ENCODE measurements at regions of chr7 and their contacts with region 1.

Region 1: GRCh38 chr7:98251841-98252639 is at the start of gene TECPR1:
- DNase-seq: peak; percentile 87 to 99
- H3K4me3 ChIP-seq: peak within 1 kb of the TSS; percentile 100
- H3K27ac ChIP-seq: peak within 1 kb of the TSS; percentile 71
- H3K4me1 ChIP-seq: peaks cover 25% of the 10 kb centered on the region
- H3K27me3 ChIP-seq: no peaks in the 10 kb centered on the region
- CTCF ChIP-seq: no peak
- total RNA-seq, gene TECPR1: 22.7 and 27.4 TPM in 2 replicates

Region 2: DNA sequence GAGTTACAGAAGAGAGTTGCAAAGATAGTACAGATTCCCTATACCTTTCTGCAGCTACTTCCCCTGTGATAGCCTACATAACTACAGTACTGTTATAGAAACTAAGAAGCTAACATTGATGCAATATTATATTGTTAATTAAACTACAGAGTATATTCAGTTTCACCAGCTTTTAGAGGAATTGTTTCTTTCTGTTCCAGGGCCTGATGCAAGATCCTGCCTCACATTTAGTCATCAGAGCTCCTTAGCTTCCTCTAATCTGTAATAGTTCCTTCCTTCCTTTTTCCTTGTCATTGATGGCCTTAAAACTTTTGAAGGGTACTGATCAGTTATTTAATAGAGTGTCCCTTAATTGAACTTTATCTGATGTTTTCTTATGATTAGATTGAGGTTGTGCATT is 1077.7 kb before region 1 on chr7:
- CTCF ChIA-PET with region 1: no interaction called
- POLR2A ChIA-PET with region 1: interaction called, 11 read pairs
- intact Hi-C with region 1: no loop called
- DNase-seq: no peak
- H3K4me3 ChIP-seq: no peak overlapping the region
- H3K27ac ChIP-seq: no peak overlapping the region
- H3K4me1 ChIP-seq: no peaks in the 10 kb centered on the region
- H3K27me3 ChIP-seq: no peaks in the 10 kb centered on the region
- CTCF ChIP-seq: no peak

Region 3: DNA sequence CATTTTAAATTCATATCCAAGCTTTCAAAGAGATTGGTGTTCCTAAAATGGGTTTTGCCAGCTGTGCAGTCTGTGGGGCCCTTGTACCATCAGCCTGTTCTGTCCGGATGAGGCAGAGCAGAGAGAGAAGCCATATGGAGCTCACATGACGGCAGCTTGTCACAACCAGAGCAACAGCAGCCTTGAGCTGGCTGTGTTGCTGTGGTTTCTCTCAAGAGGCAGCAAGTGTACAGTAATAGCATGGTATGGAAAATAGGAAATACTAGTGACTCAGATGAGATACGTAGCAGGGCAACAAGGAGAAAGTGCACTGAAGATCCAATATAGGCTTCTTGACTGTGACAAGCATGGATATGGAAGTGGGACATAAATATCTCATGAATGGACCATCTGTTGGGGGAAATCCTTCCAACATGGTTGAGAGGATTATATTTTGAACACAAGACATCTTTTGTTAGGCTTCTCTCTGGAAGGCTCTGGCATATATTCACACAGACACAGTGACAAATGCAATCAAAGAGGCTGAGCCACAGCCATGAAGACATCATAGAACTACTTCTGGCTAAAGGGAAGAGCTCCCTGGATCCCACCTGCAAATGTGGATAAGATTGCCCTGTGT is 771.2 kb before region 1 on chr7:
- CTCF ChIA-PET with region 1: no interaction called
- POLR2A ChIA-PET with region 1: no interaction called
- intact Hi-C with region 1: no loop called
- DNase-seq: no peak
- H3K4me3 ChIP-seq: no peak overlapping the region
- H3K27ac ChIP-seq: no peak overlapping the region
- H3K4me1 ChIP-seq: no peaks in the 10 kb centered on the region
- H3K27me3 ChIP-seq: peaks cover 14% of the 10 kb centered on the region; the same call in 1 of the 2 replicates
- CTCF ChIP-seq: no peak

Region 4: DNA sequence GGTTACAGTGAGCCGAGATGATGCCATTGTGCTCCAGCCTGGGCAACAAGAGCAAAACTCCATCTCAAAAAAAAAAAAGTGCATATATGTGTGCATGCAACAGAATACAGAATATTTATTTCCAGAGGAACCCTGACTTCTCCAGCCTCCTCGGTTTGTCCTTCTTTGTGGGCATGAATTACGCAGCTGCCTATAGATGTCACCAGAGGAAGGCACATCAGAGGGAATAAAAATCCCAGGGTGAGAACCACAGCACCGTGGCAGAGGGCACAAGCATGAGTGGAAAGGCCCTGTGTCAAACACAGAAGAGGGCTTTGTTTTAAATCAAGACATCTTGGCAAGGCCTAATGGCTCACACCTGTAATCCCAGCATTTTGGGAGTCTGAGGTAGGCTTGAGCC is 237.7 kb before region 1 on chr7:
- CTCF ChIA-PET with region 1: no interaction called
- POLR2A ChIA-PET with region 1: no interaction called
- intact Hi-C with region 1: no loop called
- DNase-seq: no peak
- H3K4me3 ChIP-seq: no peak overlapping the region
- H3K27ac ChIP-seq: no peak overlapping the region
- H3K4me1 ChIP-seq: no peaks in the 10 kb centered on the region
- H3K27me3 ChIP-seq: no peaks in the 10 kb centered on the region
- CTCF ChIP-seq: no peak

Region 5: DNA sequence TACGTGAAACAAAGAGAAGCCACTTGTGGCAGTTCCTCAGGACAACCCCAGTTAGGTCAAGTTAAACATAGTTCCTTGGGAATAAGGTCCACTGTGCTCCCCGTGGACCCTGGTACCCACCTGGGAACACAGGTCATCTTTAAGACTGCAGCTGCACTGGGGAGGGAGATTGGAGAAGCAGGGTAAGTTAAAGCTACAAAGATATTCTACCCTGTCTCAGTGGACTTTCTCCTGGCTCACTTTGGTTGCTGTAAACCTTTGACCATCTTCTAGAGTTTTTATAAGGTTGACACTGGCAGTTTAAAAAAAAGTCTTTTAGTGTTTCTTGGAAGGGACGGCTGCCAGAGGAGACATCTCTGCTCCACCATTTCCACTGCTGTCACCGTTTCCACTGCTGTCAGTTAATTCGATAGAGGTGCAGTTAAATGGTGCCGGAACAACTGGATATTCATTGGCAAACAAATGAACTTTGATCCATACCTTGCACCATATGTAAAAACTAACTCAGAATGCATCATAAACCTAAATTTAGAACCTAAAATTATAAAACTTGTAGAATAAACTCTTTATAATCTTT is 102.8 kb before region 1 on chr7:
- CTCF ChIA-PET with region 1: no interaction called
- POLR2A ChIA-PET with region 1: interaction called, 17 read pairs
- intact Hi-C with region 1: no loop called
- DNase-seq: no peak
- H3K4me3 ChIP-seq: no peak overlapping the region
- H3K27ac ChIP-seq: no peak overlapping the region
- H3K4me1 ChIP-seq: no peaks in the 10 kb centered on the region
- H3K27me3 ChIP-seq: no peaks in the 10 kb centered on the region
- CTCF ChIP-seq: no peak

Region 6: GRCh38 chr7:98483276-98483965 is 231.4 kb after region 1 on chr7:
- CTCF ChIA-PET with region 1: no interaction called
- POLR2A ChIA-PET with region 1: no interaction called
- intact Hi-C with region 1: no loop called
- DNase-seq: no peak
- H3K4me3 ChIP-seq: no peak overlapping the region
- H3K27ac ChIP-seq: no peak overlapping the region
- H3K4me1 ChIP-seq: no peaks in the 10 kb centered on the region
- H3K27me3 ChIP-seq: peaks cover 43% of the 10 kb centered on the region
- CTCF ChIP-seq: no peak

Measured in PC-9 (cell line).